ENCODE measurements at regions of chr22 and their contacts with region 1.

Region 1: GRCh38 chr22:42533638-42533977 is 14.0 kb upstream of the RRP7A start:
- DNase-seq: no peak
- H3K4me3 ChIP-seq: no peak overlapping the region
- H3K27ac ChIP-seq: no peak overlapping the region
- H3K4me1 ChIP-seq: peaks cover 3% of the 10 kb centered on the region
- H3K27me3 ChIP-seq: no peaks in the 10 kb centered on the region
- CTCF ChIP-seq: no peak
- POLR2A ChIP-seq: no peak

Region 2: GRCh38 chr22:42553475-42554361 is 20.1 kb after region 1 on chr22 and contains the start of gene SERHL2:
- CTCF ChIA-PET with region 1: interaction called, 8 read pairs
- POLR2A ChIA-PET with region 1: no interaction called
- dilution Hi-C with region 1: no loop called
- intact Hi-C with region 1: loop called (anchors 2 kb)
- DNase-seq: peak; percentile 87
- H3K4me3 ChIP-seq: peak within 1 kb of the TSS; percentile 47 to 60 (median 49)
- H3K27ac ChIP-seq: no peak within 1 kb of the TSS
- H3K4me1 ChIP-seq: no peaks in the 10 kb centered on the region
- H3K27me3 ChIP-seq: peaks cover 0 to 9% of the 10 kb centered on the region in 2 experiments
- CTCF ChIP-seq: no peak
- POLR2A ChIP-seq: no peak
- total RNA-seq, gene SERHL2: 0.76 and 0.80 TPM in 2 replicates

Region 3: GRCh38 chr22:42560781-42561180 is 27.2 kb after region 1 on chr22:
- CTCF ChIA-PET with region 1: interaction called, 10 read pairs
- POLR2A ChIA-PET with region 1: no interaction called
- dilution Hi-C with region 1: no loop called
- intact Hi-C with region 1: no loop called
- DNase-seq: no peak
- H3K4me3 ChIP-seq: no peak overlapping the region
- H3K27ac ChIP-seq: no peak overlapping the region
- H3K4me1 ChIP-seq: no peaks in the 10 kb centered on the region
- H3K27me3 ChIP-seq: no peaks in the 10 kb centered on the region
- CTCF ChIP-seq: peak; percentile 49 to 64
- POLR2A ChIP-seq: no peak